AG04449 (cell line): ENCODE measurements at regions of chr6 and their contacts with region 1.

Region 1: GRCh38 chr6:11653028-11653583 is 115.6 kb downstream of the TMEM170B start:
- DNase-seq: peak; percentile 90
- H3K4me3 ChIP-seq: no peak overlapping the region
- CTCF ChIP-seq: no peak

Region 2: GRCh38 chr6:11613858-11614257 is 39.2 kb before region 1 on chr6:
- CTCF ChIA-PET with region 1: interaction called, 5 read pairs
- POLR2A ChIA-PET with region 1: interaction called, 11 read pairs
- DNase-seq: peak; percentile 94
- H3K4me3 ChIP-seq: no peak overlapping the region
- CTCF ChIP-seq: no peak

Region 3: DNA sequence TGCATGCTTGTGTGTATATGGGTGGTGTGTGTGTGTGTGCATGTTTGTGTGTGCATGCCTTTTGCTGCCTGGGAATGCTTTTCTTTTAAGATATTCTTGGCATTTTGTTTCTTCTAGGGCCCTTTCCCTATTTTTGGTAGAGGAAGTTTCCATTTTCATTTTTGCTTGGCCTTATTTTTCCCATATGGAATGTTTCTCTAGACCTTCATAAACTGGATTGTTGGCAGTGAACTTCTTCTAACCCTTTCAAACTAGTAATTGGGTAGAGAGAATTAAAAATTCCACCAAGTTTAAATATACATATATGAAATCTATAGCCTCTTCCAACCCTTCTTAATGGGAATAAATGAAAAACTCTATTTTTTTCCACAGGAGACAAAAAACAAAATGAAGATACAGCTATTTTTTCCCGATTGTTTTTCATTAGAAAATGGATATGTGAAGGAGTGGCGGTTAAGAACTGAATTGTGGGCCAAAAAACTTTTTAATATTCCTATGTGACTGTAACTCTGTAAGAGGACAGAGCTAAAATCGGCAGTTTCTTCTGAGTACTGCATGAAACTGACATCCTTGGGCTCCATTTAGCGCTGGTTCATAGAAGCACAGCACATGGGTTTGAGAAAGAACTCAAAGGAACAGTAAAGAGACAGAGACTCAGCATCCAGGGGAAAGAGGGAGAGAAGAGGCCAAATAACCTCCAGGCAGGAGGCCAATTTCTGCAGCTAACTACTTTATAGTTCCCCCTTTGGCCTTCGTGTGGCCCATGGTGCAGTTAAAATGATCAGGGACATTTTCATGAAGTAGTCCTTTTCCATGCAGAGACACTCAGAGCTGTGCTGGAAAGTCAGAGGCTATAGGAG is 13.5 kb before region 1 on chr6:
- CTCF ChIA-PET with region 1: interaction called, 11 read pairs
- POLR2A ChIA-PET with region 1: no interaction called
- DNase-seq: no peak
- H3K4me3 ChIP-seq: no peak overlapping the region
- CTCF ChIP-seq: no peak

Region 4: DNA sequence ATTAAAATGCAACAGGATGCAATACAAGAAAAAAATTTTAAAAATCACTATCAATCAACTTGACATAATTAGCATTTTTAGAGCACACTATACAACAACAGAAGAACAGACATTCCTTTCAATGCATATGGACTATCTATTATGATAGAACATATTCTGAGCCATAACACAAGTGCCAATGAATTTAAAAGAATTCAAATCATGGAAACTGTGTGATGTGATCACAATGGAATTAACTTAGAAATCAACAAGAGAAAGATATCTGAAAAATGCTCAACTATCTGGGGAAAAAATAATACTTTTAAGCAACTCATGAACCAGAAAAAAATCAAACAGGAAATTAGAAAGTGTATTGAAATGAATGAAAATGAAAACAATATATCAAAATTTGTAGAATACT is 19.1 kb after region 1 on chr6:
- CTCF ChIA-PET with region 1: interaction called, 47 read pairs
- POLR2A ChIA-PET with region 1: no interaction called
- DNase-seq: peak; percentile 46
- H3K4me3 ChIP-seq: no peak overlapping the region
- CTCF ChIP-seq: no peak

Region 5: DNA sequence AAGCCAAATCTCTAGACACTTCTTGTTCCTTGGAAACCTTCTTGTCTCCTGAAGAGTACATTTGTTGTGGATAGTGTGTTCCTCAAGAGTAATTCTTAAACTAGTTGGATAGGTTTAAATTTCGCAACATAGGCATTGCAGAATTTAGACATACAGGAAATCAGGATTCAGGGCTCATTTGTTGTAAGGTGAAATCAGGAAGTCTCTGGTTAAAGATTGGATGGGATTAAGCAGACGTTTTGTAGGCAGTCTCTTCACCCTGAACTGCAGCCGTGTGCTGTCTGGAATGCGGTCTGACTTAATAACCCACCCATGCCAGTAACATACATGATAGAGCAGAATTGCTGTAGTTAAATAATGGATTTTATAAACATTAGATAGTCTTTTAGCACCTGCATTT is 380.7 kb after region 1 on chr6:
- CTCF ChIA-PET with region 1: interaction called, 13 read pairs
- POLR2A ChIA-PET with region 1: no interaction called
- DNase-seq: no peak
- H3K4me3 ChIP-seq: no peak overlapping the region
- CTCF ChIP-seq: no peak

Region 6: DNA sequence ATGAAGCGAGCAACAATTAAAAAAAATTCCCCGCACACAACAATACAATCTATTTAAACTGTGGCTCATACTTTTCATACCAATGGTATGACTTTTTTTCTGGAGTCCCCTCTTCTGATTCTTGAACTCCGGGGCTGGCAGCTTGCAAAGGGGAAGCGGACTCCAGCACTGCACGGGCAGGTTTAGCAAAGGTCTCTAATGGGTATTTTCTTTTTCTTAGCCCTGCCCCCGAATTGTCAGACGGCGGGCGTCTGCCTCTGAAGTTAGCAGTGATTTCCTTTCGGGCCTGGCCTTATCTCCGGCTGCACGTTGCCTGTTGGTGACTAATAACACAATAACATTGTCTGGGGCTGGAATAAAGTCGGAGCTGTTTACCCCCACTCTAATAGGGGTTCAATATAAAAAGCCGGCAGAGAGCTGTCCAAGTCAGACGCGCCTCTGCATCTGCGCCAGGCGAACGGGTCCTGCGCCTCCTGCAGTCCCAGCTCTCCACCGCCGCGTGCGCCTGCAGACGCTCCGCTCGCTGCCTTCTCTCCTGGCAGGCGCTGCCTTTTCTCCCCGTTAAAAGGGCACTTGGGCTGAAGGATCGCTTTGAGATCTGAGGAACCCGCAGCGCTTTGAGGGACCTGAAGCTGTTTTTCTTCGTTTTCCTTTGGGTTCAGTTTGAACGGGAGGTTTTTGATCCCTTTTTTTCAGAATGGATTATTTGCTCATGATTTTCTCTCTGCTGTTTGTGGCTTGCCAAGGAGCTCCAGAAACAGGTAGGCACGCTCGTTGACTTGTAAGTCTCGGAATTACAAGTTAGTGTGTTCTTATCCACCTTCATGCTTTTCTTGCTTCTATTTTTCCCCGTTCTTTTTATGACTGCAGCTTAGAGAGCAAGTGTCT is 637.1 kb after region 1 on chr6 and contains the start of gene EDN1:
- CTCF ChIA-PET with region 1: interaction called, 63 read pairs
- POLR2A ChIA-PET with region 1: interaction called, 3 read pairs
- DNase-seq: no peak
- H3K4me3 ChIP-seq: peak within 1 kb of the TSS; percentile 62
- CTCF ChIP-seq: peak; percentile 70